Activated T-helper 2 cell treated with anti-CD3 and anti-CD28 coated beads, Interferon-gamma antibody, Interleukin-2, Interleukin-4, amounts not matched to agents 10 μg/mL and 5 μg/mL and 100 μg/mL, durations not matched to agents 14 hours and 24 hours and 36 hours (primary cell): ENCODE measurements at regions of chr12 and their contacts with region 1.

Region 1: GRCh38 chr12:96343347-96343954 is 56.8 kb downstream of the CDK17 start:
- DNase-seq: no peak
- H3K4me3 Mint-ChIP-seq: no peak overlapping the region
- H3K27ac Mint-ChIP-seq: peak overlapping the region; percentile 58
- H3K4me1 Mint-ChIP-seq: peaks cover 43% of the 10 kb centered on the region
- H3K27me3 Mint-ChIP-seq: no peaks in the 10 kb centered on the region

Region 2: DNA sequence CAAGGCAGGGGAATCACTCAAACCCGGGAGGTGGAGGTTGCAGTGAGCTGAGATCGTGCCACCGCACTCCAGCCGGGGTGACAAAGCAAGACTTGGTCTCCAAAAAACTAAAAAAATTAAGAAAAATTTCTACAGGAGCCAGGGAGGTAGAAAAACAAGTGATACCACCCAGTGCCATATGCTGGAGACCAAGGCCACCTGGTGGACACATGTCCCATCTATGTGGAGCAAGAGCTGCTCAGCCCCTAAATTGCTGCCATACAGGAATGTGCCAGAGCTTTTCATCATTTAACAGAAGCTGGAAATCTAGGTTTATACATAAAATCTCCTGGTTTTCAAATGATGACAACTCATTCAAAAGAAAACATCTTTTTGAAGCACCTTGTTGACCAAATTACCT is 210.6 kb before region 1 on chr12:
- intact Hi-C with region 1: no loop called
- DNase-seq: no peak
- H3K4me3 Mint-ChIP-seq: no peak overlapping the region
- H3K27ac Mint-ChIP-seq: no peak overlapping the region
- H3K4me1 Mint-ChIP-seq: peaks cover 14% of the 10 kb centered on the region
- H3K27me3 Mint-ChIP-seq: peaks cover 11% of the 10 kb centered on the region

Region 3: DNA sequence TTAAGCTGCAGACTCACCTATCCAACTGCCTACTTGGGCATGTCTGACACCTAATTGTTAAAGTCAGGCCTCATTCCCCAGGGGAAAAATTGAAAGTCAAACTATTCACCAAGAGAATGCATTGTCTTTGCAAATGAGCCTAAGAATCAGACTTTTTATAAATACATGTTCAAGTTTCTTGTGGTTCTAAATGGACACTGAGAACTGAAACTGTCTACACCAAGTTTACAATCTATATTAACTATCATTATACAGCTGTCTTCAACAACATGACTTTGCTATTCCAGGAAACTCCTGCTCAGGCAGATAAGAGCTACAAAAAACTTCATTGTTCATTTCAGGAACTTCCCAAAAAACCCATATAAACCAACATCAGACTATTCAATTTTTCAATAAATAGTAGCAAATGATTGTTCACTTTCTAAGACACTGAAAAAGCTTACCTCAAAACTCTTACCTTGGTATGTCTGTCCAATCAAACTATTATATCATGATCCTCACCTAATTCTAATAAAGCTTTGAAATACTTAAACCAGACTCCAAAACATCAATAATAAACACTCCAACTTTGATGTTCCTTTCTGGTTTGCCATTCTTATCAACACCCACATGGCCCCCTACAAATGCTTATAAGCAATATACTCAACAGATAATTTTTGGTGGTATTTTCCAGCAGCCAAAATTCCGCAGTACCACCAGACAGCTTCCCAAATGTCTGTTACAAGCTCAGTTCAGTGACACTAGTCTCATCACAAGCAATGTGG is 32.6 kb after region 1 on chr12:
- intact Hi-C with region 1: loop called (anchors 5 kb)
- DNase-seq: no peak
- H3K4me3 Mint-ChIP-seq: no peak overlapping the region
- H3K27ac Mint-ChIP-seq: peak overlapping the region; percentile 49
- H3K4me1 Mint-ChIP-seq: peaks cover 68% of the 10 kb centered on the region
- H3K27me3 Mint-ChIP-seq: no peaks in the 10 kb centered on the region